Activated CD4-positive, alpha-beta T cell treated with anti-CD3 and anti-CD28 coated beads, Interleukin-2, amount 10 ng/mL, durations not matched to agents 24 days and 14 days (primary cell): ENCODE measurements at regions of chr11 and their contacts with region 1.

Region 1: GRCh38 chr11:118240999-118241768 is 11.0 kb downstream of the MPZL3 start:
- DNase-seq: peak; percentile 90
- H3K4me3 Mint-ChIP-seq: peak overlapping the region; percentile 87
- H3K27ac Mint-ChIP-seq: peak overlapping the region; percentile 98
- H3K4me1 Mint-ChIP-seq: peaks cover 74% of the 10 kb centered on the region
- H3K27me3 Mint-ChIP-seq: peaks cover 2% of the 10 kb centered on the region

Region 2: GRCh38 chr11:118206391-118207031 is 34.7 kb before region 1 on chr11:
- intact Hi-C with region 1: loop called (anchors 1 kb)
- DNase-seq: no peak
- H3K4me3 Mint-ChIP-seq: peak overlapping the region; percentile 65
- H3K27ac Mint-ChIP-seq: no peak overlapping the region
- H3K4me1 Mint-ChIP-seq: peaks cover 47% of the 10 kb centered on the region
- H3K27me3 Mint-ChIP-seq: no peaks in the 10 kb centered on the region

Region 3: DNA sequence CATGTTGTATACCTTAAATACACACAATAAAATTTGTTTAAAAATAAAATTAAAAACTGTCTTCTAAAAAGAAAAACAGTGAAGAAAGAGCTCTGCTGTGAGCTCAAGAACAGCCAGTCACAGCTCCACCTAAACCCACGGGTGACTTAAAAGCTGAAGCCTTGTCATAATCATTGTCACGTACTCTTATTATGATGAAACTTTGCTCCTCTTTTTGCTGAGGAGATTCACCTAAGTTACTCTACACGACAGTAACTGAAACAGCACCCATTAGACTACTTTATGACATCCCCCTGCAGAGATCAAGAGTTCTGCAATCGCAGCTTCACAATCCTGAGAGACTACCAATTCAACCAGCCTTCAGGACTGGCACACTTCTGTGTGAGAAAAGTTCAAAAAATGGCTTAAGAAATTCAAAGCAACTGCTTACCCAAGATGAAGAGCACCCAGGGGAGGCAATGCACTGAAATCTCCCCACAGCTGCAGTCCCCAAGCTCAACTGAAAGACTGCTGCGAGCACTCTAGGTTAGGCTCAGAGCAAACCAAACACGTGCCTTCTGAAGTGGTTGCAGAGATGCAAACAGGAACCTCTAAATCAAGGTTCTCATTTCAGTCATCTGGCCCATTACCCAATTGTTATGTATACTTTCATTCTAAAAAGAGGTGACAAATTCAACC is 16.5 kb before region 1 on chr11 and contains the start of gene JAML:
- intact Hi-C with region 1: loop called (anchors 2 kb)
- DNase-seq: peak; percentile 92
- H3K4me3 Mint-ChIP-seq: peak within 1 kb of the TSS; percentile 91
- H3K27ac Mint-ChIP-seq: peak within 1 kb of the TSS; percentile 96
- H3K4me1 Mint-ChIP-seq: peaks cover 77% of the 10 kb centered on the region
- H3K27me3 Mint-ChIP-seq: no peaks in the 10 kb centered on the region
- total RNA-seq, gene JAML: 303 and 318 TPM in 2 replicates

Region 4: GRCh38 chr11:118263695-118264567 is 22.7 kb after region 1 on chr11 and contains the start of gene MPZL2:
- intact Hi-C with region 1: no loop called
- DNase-seq: peak; percentile 73
- H3K4me3 Mint-ChIP-seq: peak within 1 kb of the TSS; percentile 82
- H3K27ac Mint-ChIP-seq: peak within 1 kb of the TSS; percentile 68
- H3K4me1 Mint-ChIP-seq: peaks cover 40% of the 10 kb centered on the region
- H3K27me3 Mint-ChIP-seq: peaks cover 5% of the 10 kb centered on the region
- total RNA-seq, gene MPZL2: 18.5 and 19.3 TPM in 2 replicates

Region 5: GRCh38 chr11:118277306-118277705 is 36.1 kb after region 1 on chr11:
- intact Hi-C with region 1: no loop called
- DNase-seq: peak; percentile 70
- H3K4me3 Mint-ChIP-seq: no peak overlapping the region
- H3K27ac Mint-ChIP-seq: peak overlapping the region; percentile 36
- H3K4me1 Mint-ChIP-seq: peaks cover 41% of the 10 kb centered on the region
- H3K27me3 Mint-ChIP-seq: no peaks in the 10 kb centered on the region

Region 6: GRCh38 chr11:118290923-118291322 is 49.7 kb after region 1 on chr11:
- intact Hi-C with region 1: loop called (anchors 2 kb)
- DNase-seq: peak; percentile 87
- H3K4me3 Mint-ChIP-seq: no peak overlapping the region
- H3K27ac Mint-ChIP-seq: peak overlapping the region; percentile 1
- H3K4me1 Mint-ChIP-seq: peaks cover 23% of the 10 kb centered on the region
- H3K27me3 Mint-ChIP-seq: peaks cover 2% of the 10 kb centered on the region